Common myeloid progenitor, CD34-positive (primary cell): ENCODE measurements at regions of chr12 and their contacts with region 1.

Region 1: GRCh38 chr12:5796171-5796958 is 148.7 kb downstream of the ANO2 start:
- DNase-seq: peak; percentile 48 to 72 (median 67)
- H3K4me3 ChIP-seq: no peak overlapping the region
- H3K27ac ChIP-seq: no peak overlapping the region
- H3K4me1 ChIP-seq: peaks cover 0 to 3% (median 0%) of the 10 kb centered on the region in 4 experiments
- H3K27me3 ChIP-seq: peaks cover 0 to 1% (median 0%) of the 10 kb centered on the region in 5 experiments

Region 2: DNA sequence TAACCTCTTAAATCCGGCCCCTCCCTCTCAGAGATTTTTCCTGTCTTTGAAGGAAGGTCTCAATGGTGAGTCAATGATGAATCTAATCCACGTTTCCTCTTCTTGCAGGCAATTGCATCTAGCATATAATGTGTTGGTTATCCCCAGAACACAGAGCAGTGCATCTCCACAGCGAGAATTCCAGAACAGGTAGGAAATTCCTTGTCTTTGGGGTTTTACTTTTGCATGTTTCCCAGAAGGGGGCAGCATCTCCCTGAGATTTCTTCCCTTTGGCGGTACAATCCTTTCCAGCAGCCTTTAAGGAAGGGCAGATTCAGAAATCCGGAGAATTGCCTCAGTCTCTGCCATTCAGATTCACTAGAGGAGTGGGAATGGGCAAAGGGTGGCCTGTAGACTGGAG is 624.7 kb before region 1 on chr12:
- CTCF ChIA-PET with region 1: interaction called, 15 read pairs
- POLR2A ChIA-PET with region 1: no interaction called
- DNase-seq: peak; percentile 25 to 52 (median 42)
- H3K4me3 ChIP-seq: no peak overlapping the region
- H3K27ac ChIP-seq: no peak overlapping the region
- H3K4me1 ChIP-seq: no peaks in the 10 kb centered on the region
- H3K27me3 ChIP-seq: peaks cover 0 to 4% (median 0%) of the 10 kb centered on the region in 5 experiments

Region 3: DNA sequence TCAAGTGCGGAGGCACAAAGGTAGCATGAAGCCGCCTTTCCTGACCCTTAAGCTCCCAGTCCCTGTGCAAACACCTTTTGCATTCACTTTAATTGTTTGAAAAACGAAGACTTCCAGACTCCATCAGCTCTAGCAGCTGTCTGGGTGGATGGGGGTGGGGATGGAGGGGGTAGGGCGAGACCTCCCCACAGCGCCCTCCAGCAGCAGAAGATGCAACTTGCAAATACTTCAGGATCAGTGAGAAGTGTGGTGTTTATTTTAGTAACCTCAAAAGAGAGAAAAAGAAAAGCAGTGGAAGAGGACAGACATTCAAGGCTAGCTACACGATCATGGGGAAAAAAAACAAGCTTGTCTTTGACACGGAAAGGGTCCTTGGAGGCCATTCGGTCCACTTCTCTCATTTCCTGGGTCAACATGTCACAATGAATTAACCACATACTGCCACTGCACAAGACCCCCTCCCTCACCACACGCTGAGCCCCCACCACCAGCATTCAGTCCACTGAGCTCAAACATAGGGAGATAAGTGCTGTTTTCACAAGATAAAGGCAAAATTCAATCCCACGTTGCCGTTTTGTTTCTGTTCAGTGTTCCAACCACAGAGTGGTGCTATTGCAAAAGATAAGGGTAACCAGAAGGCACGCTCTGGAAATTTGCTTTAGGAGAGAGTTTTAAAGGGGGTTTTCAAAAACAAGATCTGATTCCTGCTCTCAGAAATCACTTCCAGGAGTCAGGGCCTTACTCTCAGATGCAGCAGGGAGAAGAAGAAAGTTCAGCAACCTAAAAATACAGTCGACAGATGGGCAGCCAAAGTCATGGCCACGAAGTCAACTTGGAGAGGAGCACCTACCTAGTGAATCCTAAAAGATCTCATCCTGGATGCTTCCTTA is 367.8 kb before region 1 on chr12:
- CTCF ChIA-PET with region 1: interaction called, 32 read pairs
- POLR2A ChIA-PET with region 1: no interaction called
- DNase-seq: peak; percentile 44 to 74 (median 72)
- H3K4me3 ChIP-seq: peak overlapping the region in 2 of 7 experiments; percentile 30 to 59
- H3K27ac ChIP-seq: no peak overlapping the region
- H3K4me1 ChIP-seq: peaks cover 0 to 43% (median 33%) of the 10 kb centered on the region in 4 experiments
- H3K27me3 ChIP-seq: peaks cover 2 to 52% (median 14%) of the 10 kb centered on the region in 5 experiments

Region 4: GRCh38 chr12:5745265-5745888 is 51.0 kb before region 1 on chr12:
- CTCF ChIA-PET with region 1: interaction called, 20 read pairs
- POLR2A ChIA-PET with region 1: no interaction called
- DNase-seq: peak; percentile 72 to 85 (median 82)
- H3K4me3 ChIP-seq: no peak overlapping the region
- H3K27ac ChIP-seq: no peak overlapping the region
- H3K4me1 ChIP-seq: peaks cover 2 to 47% (median 20%) of the 10 kb centered on the region in 4 experiments
- H3K27me3 ChIP-seq: no peaks in the 10 kb centered on the region

Region 5: DNA sequence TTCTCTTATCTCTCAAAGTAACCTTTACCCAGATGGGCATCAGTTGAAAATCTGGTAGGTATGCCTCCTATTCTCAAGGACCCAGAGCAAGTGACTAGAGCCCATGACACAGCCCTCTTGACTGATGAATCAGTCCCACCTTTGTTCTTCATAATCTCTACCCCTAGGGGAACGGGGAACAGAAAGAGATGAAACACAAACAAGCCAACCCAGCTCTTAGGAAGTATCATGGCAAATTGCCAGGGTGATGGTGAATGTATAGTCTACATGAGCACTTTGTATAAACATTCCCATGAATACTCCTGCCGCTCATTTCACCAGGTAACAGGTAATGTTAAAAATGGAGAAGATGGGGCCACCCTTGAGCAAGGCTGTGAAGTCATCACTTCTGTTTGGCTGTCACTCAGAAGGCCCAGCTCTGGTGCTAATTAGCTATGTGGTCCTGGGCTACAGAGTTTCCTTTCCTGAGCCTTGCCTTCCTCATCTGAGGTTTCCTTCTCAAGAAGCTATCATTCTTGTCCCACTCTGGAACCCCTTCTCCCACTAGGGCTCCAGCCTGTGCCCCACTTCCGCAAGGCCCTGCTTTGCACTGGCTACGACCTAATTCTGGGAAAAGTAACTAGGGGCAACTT is 13.0 kb before region 1 on chr12:
- CTCF ChIA-PET with region 1: interaction called, 10 read pairs
- POLR2A ChIA-PET with region 1: interaction called, 3 read pairs
- DNase-seq: no peak
- H3K4me3 ChIP-seq: no peak overlapping the region
- H3K27ac ChIP-seq: no peak overlapping the region
- H3K4me1 ChIP-seq: no peaks in the 10 kb centered on the region
- H3K27me3 ChIP-seq: no peaks in the 10 kb centered on the region